Heart right ventricle (tissue), 16 donors: ENCODE measurements at regions of chr4 and their contacts with region 1.

Region 1: GRCh38 chr4:184978211-184978610 is 40.1 kb upstream of the HELT start:
- DNase-seq: peak; percentile 63 to 66
- ATAC-seq: peak; percentile 63 to 93 (median 81)
- H3K4me3 ChIP-seq: no peak overlapping the region
- H3K27ac ChIP-seq: peak overlapping the region in 4 of 10 donors; percentile 1 to 60 (median 37)
- H3K4me1 ChIP-seq: peaks cover 0 to 25% (median 19%) of the 10 kb centered on the region in 9 donors
- H3K27me3 ChIP-seq: peaks cover 0 to 4% (median 0%) of the 10 kb centered on the region in 7 donors
- CTCF ChIP-seq: no peak

Region 2: GRCh38 chr4:184792950-184793555 is 185.2 kb before region 1 on chr4:
- intact Hi-C with region 1: no loop called
- DNase-seq: no peak
- ATAC-seq: peak in 4 of 8 donors; percentile 32 to 74 (median 52)
- H3K4me3 ChIP-seq: no peak overlapping the region
- H3K27ac ChIP-seq: peak overlapping the region in 5 of 10 donors; percentile 20 to 79 (median 49)
- H3K4me1 ChIP-seq: peaks cover 0 to 56% (median 43%) of the 10 kb centered on the region in 9 donors
- H3K27me3 ChIP-seq: no peaks in the 10 kb centered on the region
- CTCF ChIP-seq: no peak

Region 3: GRCh38 chr4:184825896-184826690 is 152.1 kb before region 1 on chr4 and contains the start of gene ACSL1:
- intact Hi-C with region 1: loop called in 1 of 10 experiments (anchors 5 kb)
- DNase-seq: peak; percentile 81 to 88
- ATAC-seq: peak; percentile 84 to 93 (median 88)
- H3K4me3 ChIP-seq: peak within 1 kb of the TSS; percentile 50 to 89 (median 70)
- H3K27ac ChIP-seq: peak within 1 kb of the TSS; percentile 63 to 96 (median 84)
- H3K4me1 ChIP-seq: peaks cover 2 to 53% (median 38%) of the 10 kb centered on the region in 9 donors
- H3K27me3 ChIP-seq: no peaks in the 10 kb centered on the region
- CTCF ChIP-seq: peak in 1 of 9 donors; percentile 8
- total RNA-seq, gene ACSL1: 181 to 526 (median 239) TPM

Region 4: DNA sequence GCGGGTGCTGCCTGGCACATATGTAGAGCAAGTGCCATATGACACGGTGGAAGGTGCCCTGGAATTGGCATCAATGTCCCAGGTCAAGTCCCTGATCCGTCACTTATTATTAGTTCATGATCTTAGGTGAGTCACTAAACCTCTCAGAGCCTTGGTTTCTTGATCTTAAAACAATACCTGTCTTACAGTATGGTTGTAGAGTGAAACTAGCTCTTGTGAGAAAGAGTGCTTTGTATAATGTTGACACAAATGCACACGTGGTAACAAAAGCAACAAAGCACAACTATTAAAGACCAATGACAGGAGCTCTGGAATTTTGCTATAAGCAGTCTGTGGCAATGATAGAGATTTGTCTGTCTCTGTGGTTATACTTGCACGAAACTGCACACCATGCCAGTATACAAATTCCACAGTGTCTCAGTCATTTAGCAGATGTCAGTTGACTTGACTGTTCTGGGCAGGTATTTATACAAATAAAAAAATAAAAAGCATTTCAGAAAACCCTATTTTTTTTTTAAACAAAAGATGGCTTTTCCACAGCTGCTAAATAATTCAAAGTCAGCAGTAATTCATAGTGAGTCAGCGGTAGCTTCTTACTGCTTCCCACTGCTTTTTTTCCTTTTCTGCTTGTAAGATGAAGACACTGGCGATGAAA is 132.7 kb before region 1 on chr4:
- intact Hi-C with region 1: loop called in 1 of 10 experiments (anchors 10 kb)
- DNase-seq: no peak
- ATAC-seq: no peak
- H3K4me3 ChIP-seq: no peak overlapping the region
- H3K27ac ChIP-seq: peak overlapping the region in 1 of 10 donors; percentile 50
- H3K4me1 ChIP-seq: peaks cover 0 to 25% (median 0%) of the 10 kb centered on the region in 9 donors
- H3K27me3 ChIP-seq: peaks cover 0 to 10% (median 0%) of the 10 kb centered on the region in 7 donors
- CTCF ChIP-seq: no peak

Region 5: DNA sequence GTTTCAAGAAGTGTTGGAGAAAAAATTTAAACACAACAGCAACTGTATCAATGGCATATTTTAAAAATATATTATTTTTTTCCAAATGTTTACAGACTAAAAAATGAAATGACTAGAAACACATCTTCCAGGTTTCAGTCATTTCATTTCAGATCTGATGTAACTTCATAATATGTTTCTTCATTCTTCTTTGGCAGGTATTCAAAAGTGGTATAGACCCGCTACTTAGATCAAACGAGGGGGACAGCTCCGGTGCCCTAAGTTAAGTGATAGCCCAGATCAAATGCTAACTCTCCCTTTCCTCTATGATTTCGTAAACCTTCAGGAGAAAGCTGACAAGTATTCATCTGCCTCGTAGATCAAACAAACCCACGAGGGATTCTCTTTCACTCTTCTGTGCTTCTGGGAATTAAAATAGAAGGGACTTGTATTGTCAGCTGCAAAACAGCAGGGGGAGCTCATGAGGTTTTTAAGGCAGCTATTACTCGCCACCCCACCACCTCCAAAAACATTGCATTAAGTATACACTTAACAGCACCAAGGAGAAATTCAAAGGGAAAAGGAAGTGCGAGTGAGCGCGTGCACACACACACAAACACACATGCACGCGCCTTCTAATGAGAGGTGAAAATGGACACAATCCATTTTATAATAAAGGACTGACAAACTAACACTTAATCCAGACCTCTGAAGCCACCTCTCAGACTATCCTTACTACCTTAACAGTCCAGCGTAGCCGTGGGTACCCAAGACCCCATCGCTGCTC is 61.5 kb after region 1 on chr4:
- intact Hi-C with region 1: no loop called
- DNase-seq: peak in 1 of 2 donors; percentile 59
- ATAC-seq: peak in 7 of 8 donors; percentile 46 to 86 (median 75)
- H3K4me3 ChIP-seq: peak overlapping the region in 2 of 10 donors; percentile 7 to 24
- H3K27ac ChIP-seq: no peak overlapping the region
- H3K4me1 ChIP-seq: peaks cover 0 to 11% (median 6%) of the 10 kb centered on the region in 9 donors
- H3K27me3 ChIP-seq: peaks cover 0 to 2% (median 0%) of the 10 kb centered on the region in 7 donors
- CTCF ChIP-seq: peak; percentile 62 to 89 (median 81)